ENCODE measurements at regions of chr1 and their contacts with region 1.

Region 1: GRCh38 chr1:105137543-105138457 is 1388.1 kb downstream of the AMY1C start:
- DNase-seq: peak; percentile 57
- ATAC-seq: peak; percentile 96
- H3K4me3 ChIP-seq: peak overlapping the region; percentile 17 to 66 (median 50); a peak in 5 of 6 replicates
- H3K27ac ChIP-seq: no peak overlapping the region
- H3K4me1 ChIP-seq: peaks cover 17% of the 10 kb centered on the region
- H3K27me3 ChIP-seq: no peaks in the 10 kb centered on the region
- CTCF ChIP-seq: peak; percentile 71
- EP300 ChIP-seq: no peak
- POLR2A ChIP-seq: no peak
- RAD21 ChIP-seq: peak; percentile 39; the same call in 1 of the 2 replicates

Region 2: DNA sequence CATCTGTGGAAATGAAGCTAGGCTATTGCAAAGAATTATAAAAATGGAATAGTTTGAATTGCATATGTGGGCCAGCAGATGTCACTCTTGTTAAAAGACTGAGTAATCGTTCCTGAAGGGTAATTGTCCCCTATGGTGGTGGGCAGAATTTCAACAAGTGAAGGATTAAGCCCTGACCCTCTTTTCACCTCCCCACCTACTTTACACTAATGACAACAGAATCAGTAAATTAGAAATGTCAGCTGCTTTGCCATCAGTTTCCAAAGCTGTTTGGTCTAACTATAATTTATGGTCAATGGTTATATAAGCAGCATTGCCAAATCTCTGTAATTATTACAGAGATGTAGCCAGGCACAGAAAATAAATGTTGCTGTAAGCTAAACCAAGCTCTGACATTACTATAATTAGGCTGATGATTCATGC is 489.5 kb before region 1 on chr1:
- CTCF ChIA-PET with region 1: interaction called, 3 read pairs
- POLR2A ChIA-PET with region 1: no interaction called
- in situ Hi-C with region 1: no loop called
- intact Hi-C with region 1: loop called (anchors 10 kb)
- DNase-seq: peak; percentile 38
- ATAC-seq: peak; percentile 79
- H3K4me3 ChIP-seq: no peak overlapping the region
- H3K27ac ChIP-seq: no peak overlapping the region
- H3K4me1 ChIP-seq: no peaks in the 10 kb centered on the region
- H3K27me3 ChIP-seq: no peaks in the 10 kb centered on the region
- CTCF ChIP-seq: peak; percentile 60
- EP300 ChIP-seq: no peak
- POLR2A ChIP-seq: no peak
- RAD21 ChIP-seq: no peak

Region 3: GRCh38 chr1:104780470-104781078 is 357.2 kb before region 1 on chr1:
- CTCF ChIA-PET with region 1: no interaction called
- POLR2A ChIA-PET with region 1: no interaction called
- in situ Hi-C with region 1: no loop called
- intact Hi-C with region 1: loop called (anchors 5 kb)
- DNase-seq: peak; percentile 19
- ATAC-seq: no peak
- H3K4me3 ChIP-seq: no peak overlapping the region
- H3K27ac ChIP-seq: no peak overlapping the region
- H3K4me1 ChIP-seq: no peaks in the 10 kb centered on the region
- H3K27me3 ChIP-seq: no peaks in the 10 kb centered on the region
- CTCF ChIP-seq: peak; percentile 73
- EP300 ChIP-seq: no peak
- POLR2A ChIP-seq: no peak
- RAD21 ChIP-seq: peak; percentile 42

Region 4: GRCh38 chr1:104878203-104878909 is 259.4 kb before region 1 on chr1:
- CTCF ChIA-PET with region 1: no interaction called
- POLR2A ChIA-PET with region 1: no interaction called
- in situ Hi-C with region 1: no loop called
- intact Hi-C with region 1: loop called (anchors 5 kb)
- DNase-seq: peak; percentile 3
- ATAC-seq: peak; percentile 75
- H3K4me3 ChIP-seq: no peak overlapping the region
- H3K27ac ChIP-seq: no peak overlapping the region
- H3K4me1 ChIP-seq: no peaks in the 10 kb centered on the region
- H3K27me3 ChIP-seq: no peaks in the 10 kb centered on the region
- CTCF ChIP-seq: peak; percentile 51
- EP300 ChIP-seq: no peak
- POLR2A ChIP-seq: no peak
- RAD21 ChIP-seq: no peak

Region 5: GRCh38 chr1:104979651-104980050 is 158.1 kb before region 1 on chr1:
- CTCF ChIA-PET with region 1: no interaction called
- POLR2A ChIA-PET with region 1: no interaction called
- in situ Hi-C with region 1: no loop called
- intact Hi-C with region 1: loop called (anchors 5 kb)
- DNase-seq: no peak
- ATAC-seq: no peak
- H3K4me3 ChIP-seq: no peak overlapping the region
- H3K27ac ChIP-seq: no peak overlapping the region
- H3K4me1 ChIP-seq: no peaks in the 10 kb centered on the region
- H3K27me3 ChIP-seq: no peaks in the 10 kb centered on the region; a peak in 1 of 5 replicates
- CTCF ChIP-seq: no peak
- EP300 ChIP-seq: no peak
- POLR2A ChIP-seq: no peak
- RAD21 ChIP-seq: no peak

Region 6: DNA sequence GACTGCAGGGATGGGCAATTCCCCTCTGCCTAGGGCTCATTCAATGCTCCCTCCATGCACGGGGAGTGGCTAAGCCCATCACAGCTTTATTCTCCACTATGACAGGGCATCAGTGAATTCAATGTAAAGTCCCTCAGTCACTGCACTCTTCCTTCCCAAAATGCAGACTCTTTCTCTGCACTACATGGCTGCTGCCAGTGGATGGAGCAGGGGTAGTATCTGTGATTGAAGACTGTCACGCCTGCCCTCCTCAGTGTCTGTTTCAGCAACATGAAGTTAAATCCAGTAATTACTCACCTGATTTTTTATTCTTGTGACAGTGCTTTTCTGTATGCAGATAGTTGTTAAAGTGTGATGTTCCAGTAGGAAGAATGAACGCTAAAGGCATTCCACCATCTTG is 65.0 kb before region 1 on chr1:
- CTCF ChIA-PET with region 1: no interaction called
- POLR2A ChIA-PET with region 1: no interaction called
- in situ Hi-C with region 1: no loop called
- intact Hi-C with region 1: loop called (anchors 1 kb)
- DNase-seq: no peak
- ATAC-seq: peak; percentile 33; the same call in 1 of the 3 replicates
- H3K4me3 ChIP-seq: no peak overlapping the region
- H3K27ac ChIP-seq: no peak overlapping the region
- H3K4me1 ChIP-seq: no peaks in the 10 kb centered on the region
- H3K27me3 ChIP-seq: no peaks in the 10 kb centered on the region
- CTCF ChIP-seq: 0 out of 2 replicates have a peak, but pooled peaks have one; percentile 8
- EP300 ChIP-seq: no peak
- POLR2A ChIP-seq: no peak
- RAD21 ChIP-seq: no peak

Region 7: GRCh38 chr1:105100102-105100501 is 37.7 kb before region 1 on chr1:
- CTCF ChIA-PET with region 1: no interaction called
- POLR2A ChIA-PET with region 1: no interaction called
- in situ Hi-C with region 1: no loop called
- intact Hi-C with region 1: loop called (anchors 5 kb)
- DNase-seq: peak; percentile 75
- ATAC-seq: peak; percentile 81
- H3K4me3 ChIP-seq: no peak overlapping the region; a peak in 1 of 6 replicates
- H3K27ac ChIP-seq: no peak overlapping the region
- H3K4me1 ChIP-seq: peaks cover 34% of the 10 kb centered on the region
- H3K27me3 ChIP-seq: no peaks in the 10 kb centered on the region
- CTCF ChIP-seq: no peak
- EP300 ChIP-seq: peak in 1 of 2 experiments; percentile 71; a peak in 2 of 4 replicates
- POLR2A ChIP-seq: no peak
- RAD21 ChIP-seq: no peak